Kidney (tissue), 22 donors: ENCODE measurements at regions of chr17 and their contacts with region 1.

Region 1: DNA sequence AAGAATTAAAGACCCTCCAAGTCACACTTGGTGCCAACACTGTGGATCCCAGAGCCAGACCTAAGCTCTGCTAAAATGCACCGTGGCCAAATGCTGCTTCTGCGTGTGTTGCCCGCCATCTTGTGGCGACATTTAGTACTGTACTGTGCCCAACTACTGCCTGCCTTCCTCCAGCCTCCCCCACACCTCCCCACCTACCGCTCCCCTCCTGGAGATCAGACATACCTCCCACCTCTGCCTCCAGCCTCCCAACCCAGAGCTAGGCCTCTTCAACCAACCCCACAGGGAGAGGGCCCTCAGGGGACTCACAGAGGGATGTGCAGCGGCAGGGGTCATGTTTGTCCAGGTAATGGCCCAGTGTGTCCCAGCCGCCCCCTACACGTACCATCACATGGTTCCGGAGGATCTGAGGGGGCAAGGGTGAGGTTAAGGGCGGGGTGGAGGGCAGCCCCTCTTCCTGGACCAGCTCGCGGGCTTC is 5.5 kb downstream of the GAS2L2 start:
- DNase-seq: peak; percentile 79 to 87 (median 85)
- H3K4me3 ChIP-seq: no peak overlapping the region
- H3K27ac ChIP-seq: no peak overlapping the region
- H3K4me1 ChIP-seq: peaks cover 0 to 9% (median 0%) of the 10 kb centered on the region in 3 donors
- H3K27me3 ChIP-seq: peaks cover 5% of the 10 kb centered on the region
- CTCF ChIP-seq: peak; percentile 98

Region 2: DNA sequence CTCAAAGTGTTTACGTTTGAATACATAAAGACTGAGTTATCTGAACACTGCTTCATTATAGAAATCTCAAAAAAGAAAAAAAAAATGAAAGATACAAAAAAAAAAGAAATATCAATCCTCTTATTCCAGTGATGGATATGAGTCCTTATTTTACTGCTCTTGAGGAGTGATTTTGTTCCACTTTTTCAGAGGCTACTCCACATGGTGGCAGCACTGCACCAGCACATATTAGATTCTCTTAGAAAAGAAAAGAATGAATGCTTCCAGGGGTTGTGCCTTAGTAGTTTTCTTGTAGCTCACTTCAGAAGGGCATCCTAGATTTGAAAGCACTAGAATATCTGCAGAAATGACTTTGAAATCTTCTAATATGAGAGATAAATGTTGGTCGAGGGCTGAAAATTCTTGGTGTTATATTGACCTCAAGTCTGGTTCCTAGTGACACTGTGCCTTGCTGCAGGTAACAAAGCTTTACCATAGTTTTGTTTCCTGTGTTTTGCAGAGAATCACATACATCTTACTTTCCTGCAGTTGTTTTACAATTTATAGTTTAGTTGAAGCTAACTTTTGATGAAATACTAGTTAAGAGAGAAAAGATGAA is 134.6 kb before region 1 on chr17:
- intact Hi-C with region 1: loop called (anchors 10 kb)
- DNase-seq: peak in 3 of 5 donors; percentile 45 to 79 (median 63)
- H3K4me3 ChIP-seq: no peak overlapping the region
- H3K27ac ChIP-seq: no peak overlapping the region
- H3K4me1 ChIP-seq: peaks cover 0 to 7% (median 0%) of the 10 kb centered on the region in 3 donors
- H3K27me3 ChIP-seq: no peaks in the 10 kb centered on the region
- CTCF ChIP-seq: peak; percentile 37

Region 3: GRCh38 chr17:35788504-35789368 is 41.2 kb after region 1 on chr17:
- intact Hi-C with region 1: no loop called
- DNase-seq: peak in 3 of 5 donors; percentile 41 to 56 (median 48)
- H3K4me3 ChIP-seq: no peak overlapping the region
- H3K27ac ChIP-seq: no peak overlapping the region
- H3K4me1 ChIP-seq: peaks cover under 1 to 4% (median 3%) of the 10 kb centered on the region in 3 donors
- H3K27me3 ChIP-seq: peaks cover 6% of the 10 kb centered on the region
- CTCF ChIP-seq: no peak

Region 4: DNA sequence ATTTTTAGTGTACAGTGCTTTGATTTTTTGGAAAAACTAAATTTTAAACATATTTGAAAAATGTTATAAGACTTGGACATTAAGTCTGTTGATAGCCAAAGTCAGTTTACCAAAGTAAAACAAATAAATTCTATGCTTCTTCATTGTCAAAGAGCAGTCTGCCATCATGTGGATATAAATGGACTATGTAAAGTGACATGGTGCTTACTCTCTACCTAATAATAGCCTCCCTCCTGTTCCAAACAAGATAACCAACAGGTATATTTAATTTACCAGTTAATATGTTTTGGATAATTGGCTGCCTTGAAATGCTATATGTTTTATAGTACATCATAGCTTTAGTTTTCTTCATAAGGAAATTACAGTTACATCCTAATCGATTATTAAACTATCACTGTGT is 77.6 kb after region 1 on chr17:
- intact Hi-C with region 1: no loop called
- DNase-seq: no peak
- H3K4me3 ChIP-seq: no peak overlapping the region
- H3K27ac ChIP-seq: no peak overlapping the region
- H3K4me1 ChIP-seq: no peaks in the 10 kb centered on the region
- H3K27me3 ChIP-seq: no peaks in the 10 kb centered on the region
- CTCF ChIP-seq: no peak